Activated CD4-positive, alpha-beta T cell treated with anti-CD3 and anti-CD28 coated beads, Interleukin-2, amount 10 ng/mL, durations not matched to agents 24 days and 14 days (primary cell): ENCODE measurements at regions of chr2 and their contacts with region 1.

Region 1: DNA sequence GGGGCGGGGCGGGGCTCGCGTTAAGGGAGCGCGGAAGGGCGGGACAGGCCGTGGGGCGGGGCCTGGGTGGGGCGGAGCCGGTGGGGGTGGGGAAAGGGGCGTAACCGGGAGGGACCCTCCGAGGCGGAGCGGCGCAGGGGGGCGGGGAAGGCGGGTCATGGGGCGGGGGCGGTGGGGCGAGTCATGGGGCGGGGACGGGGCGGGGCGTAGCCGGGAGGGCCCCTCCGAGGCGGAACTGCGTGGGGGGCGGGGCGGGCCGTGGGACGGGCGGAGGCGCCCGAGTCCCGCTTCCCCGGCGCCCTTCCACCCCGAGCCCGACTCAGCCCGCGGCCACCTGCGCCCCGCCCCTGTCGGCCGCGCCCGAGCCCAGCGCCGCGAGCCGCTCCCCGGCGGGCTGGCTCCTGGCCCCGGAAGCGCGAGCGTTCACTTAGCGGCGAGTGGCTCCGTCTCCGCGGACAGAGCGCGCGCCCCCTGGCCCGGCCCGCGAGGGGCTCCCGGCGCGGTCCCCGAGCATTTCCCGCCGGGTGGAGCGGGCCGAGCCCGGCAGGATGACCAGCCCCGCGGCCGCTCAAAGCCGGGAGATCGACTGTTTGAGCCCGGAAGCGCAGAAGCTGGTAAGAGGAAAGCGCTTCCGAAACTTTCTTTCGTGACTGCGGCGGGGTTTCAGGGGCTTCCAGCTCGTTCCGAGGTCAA is 64.7 kb downstream of the LRRFIP1 start:
- DNase-seq: peak; percentile 98
- H3K4me3 Mint-ChIP-seq: peak overlapping the region; percentile 99
- H3K27ac Mint-ChIP-seq: peak overlapping the region; percentile 99
- H3K4me1 Mint-ChIP-seq: peaks cover 61% of the 10 kb centered on the region
- H3K27me3 Mint-ChIP-seq: no peaks in the 10 kb centered on the region

Region 2: GRCh38 chr2:236545814-236546480 is 1146.1 kb before region 1 on chr2:
- intact Hi-C with region 1: loop called (anchors 10 kb)
- DNase-seq: peak; percentile 81
- H3K4me3 Mint-ChIP-seq: peak overlapping the region; percentile 80
- H3K27ac Mint-ChIP-seq: peak overlapping the region; percentile 89
- H3K4me1 Mint-ChIP-seq: peaks cover 74% of the 10 kb centered on the region
- H3K27me3 Mint-ChIP-seq: no peaks in the 10 kb centered on the region

Region 3: DNA sequence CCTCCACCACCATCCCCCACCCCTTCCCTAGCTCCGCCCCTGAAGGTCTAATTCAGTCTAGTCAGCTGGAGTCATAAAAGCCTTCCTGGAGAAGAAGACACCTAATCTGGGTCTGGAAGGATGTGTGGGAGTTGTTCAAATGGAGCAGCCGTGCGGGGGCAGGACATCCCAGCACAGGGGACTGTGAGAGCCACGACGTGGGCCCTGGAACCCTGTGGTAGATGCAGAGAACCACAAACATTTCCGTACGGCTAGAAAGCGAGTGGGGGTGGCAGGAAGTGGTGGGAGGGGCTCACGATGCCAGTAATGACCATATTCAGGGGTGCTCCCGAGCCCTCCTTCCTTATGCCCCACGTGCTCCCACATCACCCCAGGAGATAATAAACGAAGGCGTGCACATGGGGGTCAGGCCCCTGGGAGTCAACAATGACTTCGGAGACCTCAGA is 257.2 kb before region 1 on chr2:
- intact Hi-C with region 1: loop called (anchors 2 kb)
- DNase-seq: peak; percentile 92
- H3K4me3 Mint-ChIP-seq: peak overlapping the region; percentile 89
- H3K27ac Mint-ChIP-seq: peak overlapping the region; percentile 95
- H3K4me1 Mint-ChIP-seq: peaks cover 79% of the 10 kb centered on the region
- H3K27me3 Mint-ChIP-seq: no peaks in the 10 kb centered on the region

Region 4: GRCh38 chr2:238060542-238061314 is 368.7 kb after region 1 on chr2 and contains the start of gene SCLY:
- intact Hi-C with region 1: loop called (anchors 5 kb)
- DNase-seq: peak; percentile 98
- H3K4me3 Mint-ChIP-seq: peak within 1 kb of the TSS; percentile 91
- H3K27ac Mint-ChIP-seq: peak within 1 kb of the TSS; percentile 95
- H3K4me1 Mint-ChIP-seq: peaks cover 44% of the 10 kb centered on the region
- H3K27me3 Mint-ChIP-seq: peaks cover 6% of the 10 kb centered on the region
- total RNA-seq, gene SCLY: 109 TPM in 2 replicates

Region 5: DNA sequence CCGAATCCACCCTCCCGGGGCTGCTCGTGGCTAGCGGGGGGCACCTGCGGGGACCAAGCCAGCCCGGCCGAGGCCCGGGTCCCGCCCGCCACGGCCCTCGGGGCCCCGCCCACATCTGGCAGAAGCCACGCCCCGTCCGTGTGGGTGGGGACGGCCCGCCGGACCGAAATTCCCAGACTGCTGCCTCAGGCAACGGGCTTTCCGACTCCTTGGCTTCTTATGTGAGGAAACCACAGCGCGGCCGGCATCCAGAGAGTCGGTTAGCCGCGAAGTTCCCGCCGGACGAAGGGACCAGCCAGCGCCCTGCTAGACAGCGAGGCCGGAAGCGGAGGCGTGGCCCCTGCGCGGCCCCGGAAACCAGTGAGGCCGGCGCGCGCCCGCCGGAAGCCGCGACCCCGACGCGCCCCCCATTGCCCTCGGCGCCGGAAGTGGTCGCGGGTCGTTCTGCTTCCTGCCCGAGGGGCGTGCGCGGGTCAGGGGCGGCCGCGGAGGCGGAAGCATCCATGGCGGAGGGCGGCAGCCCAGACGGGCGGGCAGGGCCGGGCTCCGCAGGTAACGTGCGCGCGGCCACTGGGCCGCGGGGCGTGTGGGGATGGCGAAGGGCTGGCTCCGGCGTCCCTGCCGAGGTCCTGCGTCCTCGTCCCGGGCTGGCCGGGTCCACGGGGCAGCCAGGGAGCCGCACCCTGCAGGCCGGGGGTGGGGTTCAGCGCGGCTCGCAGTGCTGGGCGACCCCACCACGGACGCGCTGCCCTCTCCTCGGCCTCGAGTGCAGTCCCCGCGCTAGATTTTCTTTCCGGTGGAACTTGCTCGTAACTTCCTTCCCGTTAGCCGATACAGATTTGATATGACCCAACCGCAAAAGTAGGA is 734.7 kb after region 1 on chr2 and contains the start of gene ASB1:
- intact Hi-C with region 1: loop called (anchors 10 kb)
- DNase-seq: peak; percentile 95
- H3K4me3 Mint-ChIP-seq: peak within 1 kb of the TSS; percentile 91
- H3K27ac Mint-ChIP-seq: peak within 1 kb of the TSS; percentile 93
- H3K4me1 Mint-ChIP-seq: peaks cover 33% of the 10 kb centered on the region
- H3K27me3 Mint-ChIP-seq: no peaks in the 10 kb centered on the region
- total RNA-seq, gene ASB1: 33.9 and 34.8 TPM in 2 replicates